ENCODE measurements at regions of chr1 and their contacts with region 1.

Region 1: DNA sequence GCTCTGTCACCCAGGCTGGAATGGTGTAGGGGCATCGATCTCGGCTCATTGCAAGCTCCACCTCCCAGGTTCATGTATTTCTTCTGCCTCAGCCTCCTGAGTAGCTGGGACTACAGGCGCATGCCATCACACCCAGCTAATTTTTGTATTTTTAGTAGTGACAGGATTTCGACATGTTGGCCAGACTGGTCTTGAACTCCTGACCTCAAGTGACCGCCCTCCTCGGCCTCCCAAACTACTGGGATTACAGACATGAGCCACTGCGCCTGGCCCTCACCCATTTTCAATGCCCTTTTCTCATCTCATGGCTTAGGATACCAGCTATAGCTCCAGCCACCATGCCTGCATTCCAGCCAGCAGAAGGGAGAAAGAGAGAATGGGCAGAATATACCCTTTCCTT is 12.9 kb upstream of the SOX13 start:
- DNase-seq: no peak
- ATAC-seq: no peak
- H3K4me3 ChIP-seq: no peak overlapping the region
- H3K27ac ChIP-seq: no peak overlapping the region
- H3K4me1 ChIP-seq: peaks cover 34 to 45% of the 10 kb centered on the region in 2 experiments
- H3K27me3 ChIP-seq: no peaks in the 10 kb centered on the region
- CTCF ChIP-seq: no peak
- POLR2A ChIP-seq: no peak
- RAD21 ChIP-seq: no peak

Region 2: DNA sequence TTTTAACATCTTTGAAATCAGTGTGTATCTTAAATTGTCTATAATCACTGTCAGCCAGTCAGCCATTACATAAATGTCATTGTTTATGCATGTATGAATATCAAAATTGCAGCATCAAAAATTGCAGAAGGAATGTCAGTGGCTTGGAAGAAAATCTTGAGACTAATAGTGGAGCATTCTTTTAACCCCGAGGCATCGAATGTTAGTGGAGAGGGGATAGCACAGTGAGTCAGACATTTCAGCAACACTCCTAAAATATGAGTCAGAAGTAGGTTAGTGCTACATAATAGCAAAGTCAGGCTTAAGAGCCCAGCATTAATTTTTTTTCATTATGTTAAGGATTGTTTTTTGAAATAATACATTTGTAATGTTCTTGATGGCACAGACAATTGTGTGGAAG is 153.0 kb before region 1 on chr1:
- CTCF ChIA-PET with region 1: no interaction called
- POLR2A ChIA-PET with region 1: no interaction called
- RAD21 ChIA-PET with region 1: no interaction called
- intact Hi-C with region 1: loop called (anchors 10 kb)
- DNase-seq: peak; percentile 66
- ATAC-seq: peak; percentile 92
- H3K4me3 ChIP-seq: peak overlapping the region in 1 of 2 experiments; percentile 19; a peak in 2 of 4 replicates
- H3K27ac ChIP-seq: peak overlapping the region; percentile 60; the same call in 1 of the 2 replicates
- H3K4me1 ChIP-seq: peaks cover 17 to 32% of the 10 kb centered on the region in 2 experiments
- H3K27me3 ChIP-seq: no peaks in the 10 kb centered on the region
- CTCF ChIP-seq: no peak
- POLR2A ChIP-seq: no peak
- RAD21 ChIP-seq: 0 out of 2 replicates have a peak, but pooled peaks have one; percentile 13

Region 3: GRCh38 chr1:204018463-204018862 is 41.5 kb before region 1 on chr1:
- CTCF ChIA-PET with region 1: no interaction called
- POLR2A ChIA-PET with region 1: no interaction called
- RAD21 ChIA-PET with region 1: no interaction called
- intact Hi-C with region 1: no loop called
- DNase-seq: no peak
- ATAC-seq: no peak
- H3K4me3 ChIP-seq: no peak overlapping the region
- H3K27ac ChIP-seq: no peak overlapping the region
- H3K4me1 ChIP-seq: peaks cover 0 to 6% of the 10 kb centered on the region in 2 experiments; a peak in 1 of 4 replicates
- H3K27me3 ChIP-seq: no peaks in the 10 kb centered on the region
- CTCF ChIP-seq: no peak
- POLR2A ChIP-seq: no peak
- RAD21 ChIP-seq: no peak

Region 4: DNA sequence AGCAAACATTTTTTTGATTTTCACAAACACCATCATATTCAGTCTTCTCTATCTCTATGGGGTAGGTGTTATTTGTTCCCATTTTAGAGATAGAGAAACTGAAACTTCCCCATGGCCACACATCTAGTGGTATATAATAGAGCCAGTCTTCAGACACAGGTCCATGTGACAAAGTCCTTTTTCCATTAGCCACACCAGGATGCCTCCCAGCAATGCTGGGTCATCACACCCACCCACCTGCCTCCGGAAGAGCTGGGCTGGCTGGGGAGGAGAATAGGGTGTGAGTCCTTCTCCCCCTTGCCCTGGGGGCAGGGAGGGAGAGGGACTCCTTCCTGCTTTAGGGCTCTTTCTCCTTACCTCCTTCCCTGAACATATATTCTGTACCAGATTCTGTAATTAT is 42.7 kb after region 1 on chr1:
- CTCF ChIA-PET with region 1: no interaction called
- POLR2A ChIA-PET with region 1: no interaction called
- RAD21 ChIA-PET with region 1: no interaction called
- intact Hi-C with region 1: loop called (anchors 2 kb)
- DNase-seq: peak; percentile 31
- ATAC-seq: peak; percentile 33
- H3K4me3 ChIP-seq: no peak overlapping the region
- H3K27ac ChIP-seq: peak overlapping the region; percentile 74
- H3K4me1 ChIP-seq: peaks cover 45 to 61% of the 10 kb centered on the region in 2 experiments
- H3K27me3 ChIP-seq: no peaks in the 10 kb centered on the region
- CTCF ChIP-seq: 0 out of 6 replicates have a peak, but pooled peaks of 1 of the 3 experiments have one; percentile 0
- POLR2A ChIP-seq: no peak
- RAD21 ChIP-seq: no peak

Measured in HCT116 (cell line).